ENCODE measurements at regions of chr21 and their contacts with region 1.

Region 1: GRCh38 chr21:35940074-35940927 is 120.0 kb downstream of the SETD4 start:
- DNase-seq: peak in 4 of 5 donors; percentile 29 to 48 (median 43)
- ATAC-seq: peak; percentile 82 to 99 (median 96)
- H3K4me3 ChIP-seq: peak overlapping the region in 1 of 12 donors; percentile 22
- H3K27ac ChIP-seq: peak overlapping the region in 1 of 12 donors; percentile 5
- H3K4me1 ChIP-seq: peaks cover 0 to 12% (median 1%) of the 10 kb centered on the region in 12 donors
- H3K27me3 ChIP-seq: no peaks in the 10 kb centered on the region
- CTCF ChIP-seq: peak; percentile 50 to 78 (median 64)
- POLR2A ChIP-seq: no peak

Region 2: DNA sequence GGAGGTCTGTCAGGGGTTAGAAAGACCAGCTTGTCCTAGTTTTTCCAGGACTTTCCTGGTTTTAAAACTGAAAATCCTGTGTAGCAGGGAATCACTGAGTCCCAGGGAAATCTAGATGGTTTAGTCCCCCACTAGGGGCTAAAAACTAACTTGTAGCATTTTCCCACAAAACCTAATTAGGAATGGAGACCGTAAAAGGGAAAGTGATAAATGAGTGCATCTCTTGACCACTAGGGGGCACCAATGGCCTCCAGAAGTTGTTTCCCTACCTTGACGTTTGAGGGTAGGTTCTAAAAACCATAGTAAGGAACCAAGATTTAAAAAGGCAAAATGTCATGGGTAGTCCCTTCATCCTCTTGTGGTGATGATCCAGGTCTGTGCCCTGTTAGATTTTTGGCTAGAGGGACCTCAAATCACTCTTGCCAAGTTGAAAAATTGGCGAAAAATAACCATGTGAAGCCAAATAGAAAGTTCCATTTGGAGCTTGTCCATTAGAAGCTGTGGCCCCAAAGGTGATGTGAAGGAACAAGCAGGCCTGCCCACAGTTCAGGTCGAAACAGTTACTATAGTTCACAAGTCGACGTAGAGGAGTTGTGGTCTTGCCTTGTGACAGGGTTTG is 1247.0 kb before region 1 on chr21:
- intact Hi-C with region 1: loop called in 3 of 10 experiments (anchors 5 kb)
- DNase-seq: peak in 1 of 5 donors; percentile 45
- ATAC-seq: peak in 1 of 4 donors; percentile 25
- H3K4me3 ChIP-seq: no peak overlapping the region
- H3K27ac ChIP-seq: no peak overlapping the region
- H3K4me1 ChIP-seq: peaks cover 0 to 15% (median 0%) of the 10 kb centered on the region in 12 donors
- H3K27me3 ChIP-seq: no peaks in the 10 kb centered on the region
- CTCF ChIP-seq: peak; percentile 58 to 86 (median 78)
- POLR2A ChIP-seq: no peak

Region 3: GRCh38 chr21:35400233-35400957 is 539.9 kb before region 1 on chr21:
- intact Hi-C with region 1: loop called in 1 of 10 experiments (anchors 10 kb)
- DNase-seq: peak in 1 of 5 donors; percentile 22
- ATAC-seq: peak in 3 of 4 donors; percentile 63 to 73 (median 67)
- H3K4me3 ChIP-seq: peak overlapping the region in 1 of 12 donors; percentile 19
- H3K27ac ChIP-seq: peak overlapping the region in 2 of 12 donors; percentile 8 to 42
- H3K4me1 ChIP-seq: peaks cover 0 to 27% (median 0%) of the 10 kb centered on the region in 12 donors
- H3K27me3 ChIP-seq: peaks cover 0 to 20% (median 0%) of the 10 kb centered on the region in 9 donors
- CTCF ChIP-seq: peak in 11 of 12 donors; percentile 18 to 59 (median 48)
- POLR2A ChIP-seq: no peak

Region 4: DNA sequence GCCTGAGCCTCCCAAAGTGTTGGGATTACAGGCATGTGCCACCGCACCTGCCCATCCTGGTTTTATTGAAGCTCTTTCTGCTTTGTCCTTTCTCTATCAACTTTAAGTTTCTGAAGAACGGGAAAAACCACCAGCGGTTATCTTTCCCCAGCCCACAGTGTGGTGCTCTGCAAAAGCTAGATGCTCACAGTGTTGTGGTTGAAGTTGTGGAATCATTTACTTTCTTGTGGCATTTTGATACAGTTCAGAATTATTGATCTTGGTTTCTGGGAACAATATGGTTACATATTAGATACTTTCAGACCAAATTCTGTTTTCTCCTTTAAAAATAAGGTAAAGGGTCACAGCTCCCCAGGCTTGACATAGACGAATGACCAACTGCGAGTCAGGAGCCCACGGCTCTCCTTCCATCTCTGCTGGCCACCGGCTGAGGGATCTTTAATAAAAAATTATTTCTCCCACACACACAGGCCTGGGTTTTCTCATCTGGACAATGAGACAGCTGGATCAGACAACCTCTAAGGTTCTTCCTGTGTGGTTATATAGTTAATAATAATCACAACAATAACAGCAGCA is 265.3 kb before region 1 on chr21:
- intact Hi-C with region 1: no loop called
- DNase-seq: no peak
- ATAC-seq: no peak
- H3K4me3 ChIP-seq: no peak overlapping the region
- H3K27ac ChIP-seq: no peak overlapping the region
- H3K4me1 ChIP-seq: no peaks in the 10 kb centered on the region
- H3K27me3 ChIP-seq: peaks cover 0 to 3% (median 0%) of the 10 kb centered on the region in 9 donors
- CTCF ChIP-seq: no peak
- POLR2A ChIP-seq: no peak

Region 5: GRCh38 chr21:35882791-35883240 is 57.5 kb before region 1 on chr21:
- intact Hi-C with region 1: loop called in 1 of 10 experiments (anchors 5 kb)
- DNase-seq: no peak
- ATAC-seq: no peak
- H3K4me3 ChIP-seq: no peak overlapping the region
- H3K27ac ChIP-seq: no peak overlapping the region
- H3K4me1 ChIP-seq: no peaks in the 10 kb centered on the region
- H3K27me3 ChIP-seq: peaks cover 0 to 14% (median 0%) of the 10 kb centered on the region in 9 donors
- CTCF ChIP-seq: no peak
- POLR2A ChIP-seq: no peak